CD4-positive, alpha-beta memory T cell (primary cell): ENCODE measurements at regions of chr11 and their contacts with region 1.

Region 1: GRCh38 chr11:112280268-112281126 is 19.8 kb upstream of the PLET1 start:
- DNase-seq: peak; percentile 73 to 81 (median 76)
- H3K4me3 ChIP-seq: peak overlapping the region; percentile 67 to 83
- H3K4me3 Mint-ChIP-seq: peak overlapping the region; percentile 92 to 96 (median 94)
- H3K27ac ChIP-seq: peak overlapping the region; percentile 38
- H3K27ac Mint-ChIP-seq: peak overlapping the region; percentile 65 to 91 (median 85)
- H3K4me1 ChIP-seq: peaks cover 23% of the 10 kb centered on the region
- H3K4me1 Mint-ChIP-seq: peaks cover 18 to 25% (median 22%) of the 10 kb centered on the region in 4 donors
- H3K27me3 ChIP-seq: no peaks in the 10 kb centered on the region
- H3K27me3 Mint-ChIP-seq: no peaks in the 10 kb centered on the region

Region 2: DNA sequence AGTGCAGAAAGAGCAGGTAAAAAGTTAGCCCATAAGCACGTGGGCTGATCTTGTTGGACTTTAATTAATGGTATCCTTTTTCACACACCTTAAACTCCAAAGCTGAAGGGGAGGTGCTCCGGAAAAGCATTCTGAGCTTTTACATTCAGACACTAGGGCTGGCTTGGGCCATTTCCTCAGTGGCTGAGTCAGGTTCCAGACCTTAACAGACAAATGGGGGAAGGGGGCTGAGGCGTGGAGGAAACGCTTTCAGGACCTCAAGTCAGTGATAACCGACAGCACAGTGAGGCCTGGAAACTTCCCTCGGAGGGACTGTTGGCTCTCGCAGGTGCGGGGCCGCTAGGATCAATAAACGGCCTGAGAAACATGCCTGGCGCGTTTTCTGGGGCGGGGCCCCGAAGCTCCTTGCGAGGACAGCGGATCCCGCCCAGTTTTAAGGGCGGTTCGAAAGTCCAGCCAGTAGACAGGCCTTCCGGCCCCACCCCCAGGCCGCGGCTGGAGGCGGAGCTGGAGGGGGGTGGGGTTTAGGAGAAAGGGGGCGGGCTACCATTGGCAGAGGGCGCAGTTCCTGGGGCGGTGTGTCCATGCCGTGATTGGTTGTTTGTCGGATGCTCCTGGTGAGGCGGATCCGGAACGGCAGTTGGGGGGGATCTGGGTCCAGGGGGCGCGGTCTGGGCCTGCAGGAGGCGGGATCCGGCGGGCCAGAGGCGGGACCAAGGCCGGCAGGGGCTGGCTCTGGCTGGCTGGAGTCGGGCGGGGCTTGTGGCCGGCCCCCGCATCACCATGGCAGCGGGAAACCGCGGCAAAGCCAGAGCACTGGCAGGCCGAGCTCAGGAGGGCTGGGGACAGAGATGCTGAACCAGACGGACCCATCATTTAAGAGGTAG is 353.7 kb before region 1 on chr11:
- CTCF ChIA-PET with region 1: interaction called, 6 read pairs
- POLR2A ChIA-PET with region 1: no interaction called
- intact Hi-C with region 1: loop called (anchors 2 kb)
- DNase-seq: peak; percentile 94 to 98 (median 96)
- H3K4me3 ChIP-seq: peak overlapping the region; percentile 60 to 73
- H3K4me3 Mint-ChIP-seq: peak overlapping the region; percentile 81 to 90 (median 88)
- H3K27ac ChIP-seq: peak overlapping the region; percentile 69
- H3K27ac Mint-ChIP-seq: peak overlapping the region; percentile 92 to 97 (median 95)
- H3K4me1 ChIP-seq: peaks cover 14% of the 10 kb centered on the region
- H3K4me1 Mint-ChIP-seq: peaks cover 6 to 22% (median 14%) of the 10 kb centered on the region in 4 donors
- H3K27me3 ChIP-seq: no peaks in the 10 kb centered on the region
- H3K27me3 Mint-ChIP-seq: peaks cover 0 to 2% of the 10 kb centered on the region in 2 donors

Region 3: DNA sequence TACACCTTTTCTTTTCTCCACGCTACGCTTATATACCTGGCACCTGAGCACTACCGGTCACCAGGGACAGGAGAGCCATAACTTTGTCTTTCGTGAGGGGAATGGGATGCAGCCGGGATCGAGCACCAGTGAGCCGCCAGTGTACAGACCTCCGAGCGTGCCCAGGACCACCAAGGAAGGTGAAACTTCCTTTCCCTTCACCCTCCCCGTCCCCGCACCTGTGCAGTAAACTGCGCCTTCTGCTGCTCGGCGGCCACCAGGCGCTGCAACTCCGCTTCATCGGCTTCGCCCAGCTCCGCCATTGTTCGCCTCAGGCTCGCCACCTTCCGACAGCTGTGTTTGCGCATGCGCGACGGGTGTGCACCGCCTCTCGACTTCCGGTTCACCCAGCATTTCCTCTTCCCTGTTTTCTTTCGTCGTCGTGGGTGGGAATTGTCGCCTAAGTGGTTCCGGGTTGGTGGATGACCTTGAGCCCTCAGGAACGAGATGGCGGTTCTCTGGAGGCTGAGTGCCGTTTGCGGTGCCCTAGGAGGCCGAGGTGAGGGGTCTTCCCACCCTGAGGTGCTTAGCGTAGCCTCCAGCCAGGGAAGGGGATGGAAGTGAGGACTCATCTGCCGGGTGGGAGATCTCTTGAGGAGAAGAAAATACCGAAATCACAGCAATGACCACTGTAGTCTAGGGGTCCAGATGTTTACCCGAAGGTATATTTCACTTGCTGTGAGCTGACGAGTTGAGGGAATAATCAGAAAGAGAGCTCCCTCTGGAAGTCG is 193.9 kb before region 1 on chr11 and contains the starts of genes SDHD and TIMM8B:
- CTCF ChIA-PET with region 1: interaction called, 7 read pairs
- POLR2A ChIA-PET with region 1: no interaction called
- intact Hi-C with region 1: loop called (anchors 1 kb)
- DNase-seq: peak; percentile 96 to 98 (median 97)
- H3K4me3 ChIP-seq: peak within 1 kb of the TSS; percentile 97 to 100
- H3K4me3 Mint-ChIP-seq: peak within 1 kb of the TSS; percentile 93 to 100 (median 99)
- H3K27ac ChIP-seq: peak within 1 kb of the TSS; percentile 79
- H3K27ac Mint-ChIP-seq: peak within 1 kb of the TSS; percentile 91 to 100 (median 99)
- H3K4me1 ChIP-seq: peaks cover 39% of the 10 kb centered on the region
- H3K4me1 Mint-ChIP-seq: peaks cover 41 to 62% (median 49%) of the 10 kb centered on the region in 4 donors
- H3K27me3 ChIP-seq: no peaks in the 10 kb centered on the region
- H3K27me3 Mint-ChIP-seq: no peaks in the 10 kb centered on the region
- total RNA-seq, gene SDHD: 61.2 to 65.5 TPM
- total RNA-seq, gene TIMM8B: 26.2 to 28.0 TPM

Region 4: GRCh38 chr11:112219476-112220232 is 60.8 kb before region 1 on chr11:
- CTCF ChIA-PET with region 1: interaction called, 452 read pairs
- POLR2A ChIA-PET with region 1: interaction called, 9 read pairs
- intact Hi-C with region 1: loop called (anchors 1 kb)
- DNase-seq: peak; percentile 66 to 73 (median 71)
- H3K4me3 ChIP-seq: no peak overlapping the region
- H3K4me3 Mint-ChIP-seq: peak overlapping the region in 1 of 8 donors; percentile 13
- H3K27ac ChIP-seq: no peak overlapping the region
- H3K27ac Mint-ChIP-seq: peak overlapping the region in 3 of 7 donors; percentile 36 to 62 (median 42)
- H3K4me1 ChIP-seq: no peaks in the 10 kb centered on the region
- H3K4me1 Mint-ChIP-seq: peaks cover 0 to 5% (median 4%) of the 10 kb centered on the region in 4 donors
- H3K27me3 ChIP-seq: no peaks in the 10 kb centered on the region
- H3K27me3 Mint-ChIP-seq: no peaks in the 10 kb centered on the region

Region 5: GRCh38 chr11:112265721-112266409 is 14.6 kb before region 1 on chr11:
- CTCF ChIA-PET with region 1: interaction called, 59 read pairs
- POLR2A ChIA-PET with region 1: no interaction called
- intact Hi-C with region 1: no loop called
- DNase-seq: no peak
- H3K4me3 ChIP-seq: no peak overlapping the region
- H3K4me3 Mint-ChIP-seq: no peak overlapping the region
- H3K27ac ChIP-seq: no peak overlapping the region
- H3K27ac Mint-ChIP-seq: no peak overlapping the region
- H3K4me1 ChIP-seq: no peaks in the 10 kb centered on the region
- H3K4me1 Mint-ChIP-seq: no peaks in the 10 kb centered on the region
- H3K27me3 ChIP-seq: no peaks in the 10 kb centered on the region
- H3K27me3 Mint-ChIP-seq: no peaks in the 10 kb centered on the region

Region 6: DNA sequence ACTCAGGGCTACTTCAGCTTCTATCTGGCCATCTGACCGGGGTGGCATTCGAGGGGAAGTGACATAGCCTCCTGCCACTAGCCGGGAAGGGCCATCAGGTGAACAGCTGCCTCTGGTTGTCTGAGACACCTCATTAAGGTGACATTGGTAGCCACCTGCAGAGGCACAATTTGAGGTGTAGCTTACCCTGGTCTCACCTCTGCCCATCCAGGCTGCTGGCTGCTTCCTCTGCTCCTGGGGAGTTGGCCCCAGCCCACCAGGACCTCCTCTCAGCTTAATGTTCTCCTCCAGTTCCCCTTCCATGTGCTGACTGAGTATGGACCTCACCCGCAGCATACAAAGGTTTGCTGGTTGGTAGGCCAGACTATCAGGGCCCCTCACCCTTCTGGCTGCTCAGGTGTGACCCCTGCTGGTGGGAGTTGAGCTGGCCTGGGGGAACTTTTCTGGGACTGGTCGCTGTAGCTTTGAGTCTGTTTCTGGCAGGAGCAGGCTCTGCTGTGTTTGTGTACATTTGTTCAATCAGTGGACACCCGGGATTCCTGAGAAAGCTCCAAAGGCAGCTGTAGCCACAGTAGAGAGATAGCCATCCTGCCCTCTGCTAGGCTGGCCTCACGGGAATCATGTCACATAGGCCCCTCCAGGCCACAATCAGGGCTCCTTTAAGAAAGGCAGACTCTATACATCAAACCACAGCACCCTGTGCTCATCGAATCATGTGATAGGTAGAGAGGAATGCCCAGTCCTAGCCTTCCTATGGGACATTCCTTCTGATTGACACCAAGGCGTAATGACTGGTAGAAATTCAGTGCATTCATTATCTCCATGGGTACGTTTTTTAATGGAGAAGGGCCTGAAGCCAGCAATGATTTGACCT is 275.2 kb after region 1 on chr11:
- CTCF ChIA-PET with region 1: interaction called, 78 read pairs
- POLR2A ChIA-PET with region 1: interaction called, 4 read pairs
- intact Hi-C with region 1: no loop called
- DNase-seq: peak; percentile 56 to 64 (median 60)
- H3K4me3 ChIP-seq: no peak overlapping the region
- H3K4me3 Mint-ChIP-seq: peak overlapping the region in 4 of 8 donors; percentile 20 to 63 (median 54)
- H3K27ac ChIP-seq: no peak overlapping the region
- H3K27ac Mint-ChIP-seq: peak overlapping the region in 3 of 7 donors; percentile 76 to 86 (median 83)
- H3K4me1 ChIP-seq: no peaks in the 10 kb centered on the region
- H3K4me1 Mint-ChIP-seq: peaks cover 0 to 6% (median 2%) of the 10 kb centered on the region in 4 donors
- H3K27me3 ChIP-seq: no peaks in the 10 kb centered on the region
- H3K27me3 Mint-ChIP-seq: peaks cover 3 to 4% of the 10 kb centered on the region in 2 donors

Region 7: DNA sequence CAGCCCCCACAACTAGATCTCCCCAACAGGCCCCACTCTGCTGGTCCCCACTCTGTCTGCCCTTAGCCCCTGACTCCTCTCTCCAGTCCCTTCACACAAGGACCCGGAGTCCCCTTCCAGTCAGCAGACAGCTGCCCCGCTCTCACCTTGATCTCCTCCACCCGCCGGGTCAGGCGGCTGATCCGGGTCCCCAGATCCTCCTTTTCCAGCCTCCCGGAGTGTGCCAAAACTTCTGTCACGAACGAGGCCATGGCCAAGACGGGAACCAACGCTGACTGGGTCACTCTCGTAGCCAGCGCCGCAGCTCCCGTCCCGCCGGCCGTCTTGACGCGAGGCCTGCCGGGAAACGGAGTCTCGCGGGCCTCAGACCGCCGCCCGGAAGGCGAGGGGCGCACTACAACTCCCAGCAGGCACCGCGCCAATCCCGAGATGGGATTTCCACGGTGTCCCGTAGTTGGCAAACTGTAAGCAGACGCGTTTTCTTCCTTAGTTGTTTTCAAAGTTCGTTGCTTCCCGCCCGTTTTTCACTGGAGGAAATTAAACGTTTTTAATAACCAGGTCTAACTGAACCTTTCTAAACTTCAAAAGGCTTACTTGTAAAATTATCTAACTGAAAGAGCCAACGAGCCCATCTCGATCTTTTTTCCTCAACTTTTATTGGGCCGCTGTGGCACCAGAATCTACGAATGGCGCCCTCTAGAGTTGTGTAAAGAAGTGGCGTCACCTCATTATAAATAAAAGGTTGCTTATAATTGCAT is 1493.1 kb after region 1 on chr11 and contains the start of gene ZW10:
- CTCF ChIA-PET with region 1: no interaction called
- POLR2A ChIA-PET with region 1: no interaction called
- intact Hi-C with region 1: loop called (anchors 10 kb)
- DNase-seq: peak; percentile 90 to 92 (median 92)
- H3K4me3 ChIP-seq: peak within 1 kb of the TSS; percentile 64 to 91
- H3K4me3 Mint-ChIP-seq: peak within 1 kb of the TSS; percentile 89 to 99 (median 98)
- H3K27ac ChIP-seq: peak within 1 kb of the TSS; percentile 62
- H3K27ac Mint-ChIP-seq: peak within 1 kb of the TSS; percentile 88 to 98 (median 96)
- H3K4me1 ChIP-seq: peaks cover 19% of the 10 kb centered on the region
- H3K4me1 Mint-ChIP-seq: peaks cover 12 to 31% (median 22%) of the 10 kb centered on the region in 4 donors
- H3K27me3 ChIP-seq: no peaks in the 10 kb centered on the region
- H3K27me3 Mint-ChIP-seq: peaks cover 0 to 3% of the 10 kb centered on the region in 2 donors
- total RNA-seq, gene ZW10: 8.7 to 9.7 TPM